ENCODE measurements at regions of chr19 and their contacts with region 1.

Region 1: DNA sequence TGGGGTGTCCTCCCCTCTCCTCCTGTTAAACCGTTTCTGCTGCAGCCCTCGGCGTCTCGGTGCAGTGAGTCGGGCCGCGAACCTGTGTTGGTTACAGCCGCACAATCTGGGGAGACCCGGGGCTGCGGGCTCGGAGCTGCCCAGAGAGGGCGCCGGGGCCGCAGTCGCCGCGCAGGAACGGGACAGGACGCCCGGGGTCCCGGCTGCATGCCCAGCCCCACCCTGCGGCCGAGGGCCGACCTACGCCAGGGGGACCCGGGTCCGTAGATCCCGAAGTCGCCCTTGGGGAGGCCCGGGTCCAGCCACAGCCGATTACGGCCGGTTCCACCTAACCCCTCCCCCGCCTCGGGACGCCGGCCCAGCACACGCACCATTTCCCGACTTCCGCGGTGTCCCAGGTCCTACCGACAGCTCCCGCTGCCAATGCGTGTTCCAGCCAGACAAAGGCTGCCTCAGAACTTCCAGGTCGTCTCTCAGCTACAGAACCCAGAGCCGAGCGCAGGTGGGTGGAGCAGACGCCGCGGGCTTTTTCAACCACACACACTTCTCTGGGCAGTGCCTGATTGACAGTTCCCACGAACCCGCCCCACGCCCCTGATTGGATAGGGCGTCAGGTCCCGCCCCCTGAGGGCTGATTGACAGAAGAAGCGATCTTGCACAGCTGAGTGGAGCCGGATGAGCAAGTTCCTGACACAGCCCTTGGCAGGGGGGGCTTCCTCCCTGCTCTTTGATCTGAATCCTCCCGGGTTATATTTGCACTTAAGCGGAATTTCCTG is at the start of gene ZNF443:
- DNase-seq: peak; percentile 95
- ATAC-seq: peak; percentile 95
- H3K4me3 ChIP-seq: peak within 1 kb of the TSS; percentile 68 to 74
- H3K27ac ChIP-seq: peak within 1 kb of the TSS; percentile 71
- H3K4me1 ChIP-seq: peaks cover 0 to 8% of the 10 kb centered on the region in 2 experiments; a peak in 2 of 4 replicates
- H3K27me3 ChIP-seq: no peaks in the 10 kb centered on the region
- CTCF ChIP-seq: no peak
- POLR2A ChIP-seq: peak; percentile 27
- RAD21 ChIP-seq: 0 out of 2 replicates have a peak, but pooled peaks have one; percentile 11
- total RNA-seq, gene ZNF443: 2.9 TPM

Region 2: GRCh38 chr19:12180377-12180776 is 260.4 kb before region 1 on chr19:
- CTCF ChIA-PET with region 1: no interaction called
- POLR2A ChIA-PET with region 1: no interaction called
- RAD21 ChIA-PET with region 1: no interaction called
- intact Hi-C with region 1: no loop called
- DNase-seq: no peak
- ATAC-seq: no peak
- H3K4me3 ChIP-seq: no peak overlapping the region
- H3K27ac ChIP-seq: no peak overlapping the region
- H3K4me1 ChIP-seq: no peaks in the 10 kb centered on the region
- H3K27me3 ChIP-seq: no peaks in the 10 kb centered on the region
- CTCF ChIP-seq: no peak
- POLR2A ChIP-seq: no peak
- RAD21 ChIP-seq: no peak

Region 3: DNA sequence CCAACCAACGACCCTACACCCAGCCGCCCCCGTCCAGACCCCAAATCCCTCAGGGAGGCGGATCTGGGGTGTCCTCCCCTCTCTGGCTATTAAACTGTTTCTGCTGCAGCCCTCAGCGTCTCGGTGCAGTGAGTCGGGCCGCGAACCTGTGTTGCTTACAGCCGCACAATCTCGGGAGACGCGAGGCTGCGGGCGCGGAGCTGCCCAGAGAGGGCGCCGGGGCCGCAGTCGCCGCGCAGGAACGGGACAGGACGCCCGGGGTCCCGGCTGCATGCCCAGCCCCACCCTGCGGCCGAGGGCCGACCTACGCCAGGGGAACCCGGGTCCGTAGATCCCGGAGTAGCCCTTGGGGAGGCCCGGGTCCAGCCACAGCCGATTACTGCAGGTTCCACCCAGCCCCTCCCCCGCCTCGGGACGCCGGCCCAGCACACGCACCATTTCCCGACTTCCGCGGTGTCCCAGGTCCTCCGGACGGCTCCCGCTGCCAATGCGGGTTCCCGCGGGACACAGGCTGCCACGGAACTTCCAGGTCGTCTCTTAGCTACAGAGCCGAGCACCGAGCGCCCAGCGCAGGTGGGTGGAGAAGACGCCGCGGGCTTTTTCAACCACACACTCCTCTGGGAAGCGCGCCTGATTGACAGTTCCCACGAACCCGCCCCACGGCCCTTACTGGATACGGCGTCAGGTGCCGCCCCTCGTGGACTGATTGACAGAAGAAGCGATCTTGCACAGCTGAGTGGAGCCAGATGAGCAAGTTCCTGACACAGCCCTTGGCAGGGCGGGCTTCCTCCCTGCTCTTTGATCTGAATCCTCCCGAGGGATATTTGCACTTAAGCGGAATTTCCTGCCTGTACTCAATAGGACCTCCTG is 39.9 kb before region 1 on chr19 and contains the start of gene ZNF799:
- CTCF ChIA-PET with region 1: no interaction called
- POLR2A ChIA-PET with region 1: no interaction called
- RAD21 ChIA-PET with region 1: no interaction called
- intact Hi-C with region 1: loop called (anchors 5 kb)
- DNase-seq: peak; percentile 94
- ATAC-seq: peak; percentile 95
- H3K4me3 ChIP-seq: peak within 1 kb of the TSS; percentile 72 to 82
- H3K27ac ChIP-seq: peak within 1 kb of the TSS; percentile 76
- H3K4me1 ChIP-seq: peaks cover 3 to 9% of the 10 kb centered on the region in 2 experiments; a peak in 2 of 4 replicates
- H3K27me3 ChIP-seq: no peaks in the 10 kb centered on the region
- CTCF ChIP-seq: 0 out of 6 replicates have a peak, but pooled peaks of 1 of the 3 experiments have one; percentile 16
- POLR2A ChIP-seq: no peak
- RAD21 ChIP-seq: no peak
- total RNA-seq, gene ZNF799: 3.6 TPM

Measured in HCT116 (cell line).